Heart right ventricle (tissue), 16 donors: ENCODE measurements at regions of chr7 and their contacts with region 1.

Region 1: GRCh38 chr7:54477083-54477482 is 65.1 kb upstream of the VSTM2A start:
- DNase-seq: no peak
- ATAC-seq: no peak
- H3K4me3 ChIP-seq: no peak overlapping the region
- H3K27ac ChIP-seq: no peak overlapping the region
- H3K4me1 ChIP-seq: no peaks in the 10 kb centered on the region
- H3K27me3 ChIP-seq: no peaks in the 10 kb centered on the region
- CTCF ChIP-seq: no peak

Region 2: DNA sequence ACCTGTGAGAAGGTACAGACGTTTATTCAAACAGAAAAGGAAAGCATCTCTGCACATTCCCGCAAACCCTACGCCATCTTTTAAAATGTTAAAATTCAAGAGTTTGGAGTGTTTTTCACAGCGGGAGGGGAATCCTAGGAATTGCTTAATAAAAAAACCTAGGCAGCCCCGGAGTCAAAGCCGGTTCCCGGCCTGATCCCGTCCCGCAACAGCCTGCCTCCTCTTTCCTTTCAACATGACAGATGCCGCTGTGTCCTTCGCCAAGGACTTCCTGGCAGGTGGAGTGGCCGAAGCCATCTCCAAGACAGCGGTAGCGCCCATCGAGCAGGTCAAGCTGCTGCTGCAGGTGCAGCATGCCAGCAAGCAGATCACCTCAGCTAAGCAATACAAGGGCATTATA is 57.9 kb before region 1 on chr7:
- intact Hi-C with region 1: loop called in 1 of 10 experiments (anchors 10 kb)
- DNase-seq: no peak
- ATAC-seq: no peak
- H3K4me3 ChIP-seq: no peak overlapping the region
- H3K27ac ChIP-seq: no peak overlapping the region
- H3K4me1 ChIP-seq: no peaks in the 10 kb centered on the region
- H3K27me3 ChIP-seq: no peaks in the 10 kb centered on the region
- CTCF ChIP-seq: no peak

Region 3: DNA sequence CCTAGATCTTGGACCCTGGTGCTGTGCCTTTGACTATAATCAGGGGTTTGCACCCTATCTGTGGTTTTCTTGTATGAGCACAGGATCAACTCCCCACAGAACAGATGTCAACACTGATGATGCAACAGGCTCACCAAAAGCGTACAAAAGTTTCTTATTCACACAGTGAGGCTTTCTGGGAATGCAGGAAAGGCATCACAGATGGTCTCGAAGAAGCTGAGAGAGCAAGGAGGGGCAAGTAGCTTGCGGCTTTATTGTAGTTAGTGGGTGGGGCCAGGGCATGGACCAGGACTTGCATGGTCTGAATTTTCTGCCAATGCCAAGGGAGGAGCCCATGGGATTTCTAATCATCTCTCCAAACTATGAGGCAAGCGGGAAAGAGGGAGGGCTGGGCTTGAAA is 235.7 kb after region 1 on chr7:
- intact Hi-C with region 1: no loop called
- DNase-seq: no peak
- ATAC-seq: no peak
- H3K4me3 ChIP-seq: no peak overlapping the region
- H3K27ac ChIP-seq: no peak overlapping the region
- H3K4me1 ChIP-seq: no peaks in the 10 kb centered on the region
- H3K27me3 ChIP-seq: no peaks in the 10 kb centered on the region
- CTCF ChIP-seq: no peak

Region 4: GRCh38 chr7:54831644-54832099 is 354.6 kb after region 1 on chr7:
- intact Hi-C with region 1: no loop called
- DNase-seq: no peak
- ATAC-seq: no peak
- H3K4me3 ChIP-seq: no peak overlapping the region
- H3K27ac ChIP-seq: no peak overlapping the region
- H3K4me1 ChIP-seq: peaks cover 0 to 4% (median 0%) of the 10 kb centered on the region in 9 donors
- H3K27me3 ChIP-seq: no peaks in the 10 kb centered on the region
- CTCF ChIP-seq: no peak